Activated CD4-positive, alpha-beta T cell treated with anti-CD3 and anti-CD28 coated beads for 36 hours (primary cell): ENCODE measurements at regions of chr1 and their contacts with region 1.

Region 1: DNA sequence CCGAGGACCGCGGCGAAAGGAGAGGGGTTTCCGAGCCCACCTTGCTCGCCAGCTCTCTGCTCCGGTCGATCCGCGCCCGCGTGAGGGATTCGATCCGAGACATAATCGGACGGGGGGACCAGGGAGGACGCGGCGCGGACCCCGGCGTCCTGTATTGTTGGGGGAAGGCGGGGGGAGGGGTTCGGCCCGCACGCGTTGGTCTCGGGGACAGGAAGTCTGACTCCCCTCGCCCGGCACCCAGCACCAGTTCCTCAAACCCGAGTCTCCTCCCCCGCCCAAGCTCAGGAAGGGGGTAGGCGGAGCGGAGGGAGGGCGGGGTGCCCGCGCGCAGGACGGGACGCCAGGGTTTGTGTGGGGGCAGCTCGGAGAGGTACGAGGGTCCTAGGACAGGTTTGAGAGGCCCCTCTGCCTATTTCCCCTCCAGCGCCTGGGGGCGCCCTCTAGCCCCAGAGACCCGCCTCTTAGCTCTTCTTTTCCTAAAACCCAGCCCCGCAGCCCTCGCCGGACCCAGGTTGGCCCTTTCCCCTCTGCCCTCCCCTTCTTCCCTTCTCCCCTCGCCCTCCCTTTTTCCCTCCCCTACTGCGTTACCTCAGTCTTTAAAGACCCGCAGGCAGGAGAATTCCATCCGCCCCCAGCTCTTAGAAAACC is at the start of gene ARHGEF2:
- DNase-seq: peak; percentile 88
- ATAC-seq: peak; percentile 57
- H3K4me3 Mint-ChIP-seq: peak within 1 kb of the TSS; percentile 100
- H3K27ac Mint-ChIP-seq: peak within 1 kb of the TSS; percentile 96
- H3K4me1 Mint-ChIP-seq: peaks cover 68% of the 10 kb centered on the region
- H3K27me3 Mint-ChIP-seq: no peaks in the 10 kb centered on the region
- total RNA-seq, gene ARHGEF2: 135 to 216 TPM

Region 2: DNA sequence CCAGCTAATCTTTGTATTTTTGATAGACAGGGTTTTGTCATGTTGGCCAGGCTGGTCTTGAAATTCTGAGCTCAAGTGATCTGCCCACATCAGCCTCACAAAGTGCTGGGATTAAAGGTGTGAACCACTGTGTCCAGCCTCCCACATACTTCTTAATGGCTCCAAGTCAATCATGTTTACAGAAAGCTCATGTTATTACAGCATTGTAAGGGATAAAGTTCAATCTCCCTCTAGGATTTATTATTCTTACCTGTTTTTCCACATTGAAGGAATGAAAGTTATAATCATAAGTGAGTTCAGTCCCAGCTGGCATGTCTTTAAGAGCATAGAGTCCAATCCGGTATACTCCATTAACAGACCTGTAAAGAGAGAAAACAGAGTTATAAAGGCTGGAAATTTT is 618.4 kb before region 1 on chr1:
- CTCF ChIA-PET with region 1: no interaction called
- POLR2A ChIA-PET with region 1: no interaction called
- intact Hi-C with region 1: no loop called
- DNase-seq: no peak
- ATAC-seq: no peak
- H3K4me3 Mint-ChIP-seq: no peak overlapping the region
- H3K27ac Mint-ChIP-seq: no peak overlapping the region
- H3K4me1 Mint-ChIP-seq: no peaks in the 10 kb centered on the region
- H3K27me3 Mint-ChIP-seq: no peaks in the 10 kb centered on the region

Region 3: GRCh38 chr1:155688324-155689080 is 289.9 kb before region 1 on chr1 and contains the start of gene YY1AP1:
- CTCF ChIA-PET with region 1: no interaction called
- POLR2A ChIA-PET with region 1: no interaction called
- intact Hi-C with region 1: loop called in 1 of 2 experiments (anchors 5 kb)
- DNase-seq: peak; percentile 95
- ATAC-seq: peak; percentile 86
- H3K4me3 Mint-ChIP-seq: peak within 1 kb of the TSS; percentile 97
- H3K27ac Mint-ChIP-seq: peak within 1 kb of the TSS; percentile 94
- H3K4me1 Mint-ChIP-seq: peaks cover 29% of the 10 kb centered on the region
- H3K27me3 Mint-ChIP-seq: no peaks in the 10 kb centered on the region
- total RNA-seq, gene YY1AP1: 59.6 to 76.0 TPM

Region 4: GRCh38 chr1:155940531-155940992 is 37.9 kb before region 1 on chr1:
- CTCF ChIA-PET with region 1: interaction called, 47 read pairs
- POLR2A ChIA-PET with region 1: interaction called, 62 read pairs
- intact Hi-C with region 1: no loop called
- DNase-seq: peak; percentile 29
- ATAC-seq: peak; percentile 65
- H3K4me3 Mint-ChIP-seq: no peak overlapping the region
- H3K27ac Mint-ChIP-seq: peak overlapping the region; percentile 92
- H3K4me1 Mint-ChIP-seq: peaks cover 59% of the 10 kb centered on the region
- H3K27me3 Mint-ChIP-seq: no peaks in the 10 kb centered on the region

Region 5: DNA sequence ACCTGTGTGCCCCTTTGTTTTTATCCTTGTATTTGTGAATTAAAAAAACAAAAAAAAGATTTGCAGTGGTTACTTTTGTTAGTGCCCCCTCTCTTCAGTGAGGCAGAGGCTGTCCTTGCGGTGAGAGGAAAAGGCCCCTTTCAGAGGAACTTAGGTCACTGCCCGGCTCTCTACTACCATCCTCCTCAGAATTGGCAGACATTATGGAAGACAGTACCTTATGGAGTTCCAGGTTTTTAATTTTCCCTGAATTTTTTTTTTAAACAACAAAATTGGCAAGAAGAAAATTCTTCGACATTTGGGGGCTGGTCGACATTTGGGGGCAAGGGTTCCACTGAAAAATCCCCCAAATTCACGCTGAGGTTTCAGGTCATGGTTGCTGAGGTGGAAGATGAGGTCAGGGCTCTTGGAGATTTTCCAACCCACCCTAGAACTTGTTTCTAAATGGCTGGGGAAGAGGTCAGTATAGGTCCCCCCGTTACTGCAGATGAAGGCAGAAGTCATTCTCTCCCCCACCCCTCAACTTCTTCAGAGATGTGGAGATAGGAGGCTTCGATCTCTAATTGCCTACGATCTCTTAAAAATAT is 31.7 kb before region 1 on chr1:
- CTCF ChIA-PET with region 1: interaction called, 7 read pairs
- POLR2A ChIA-PET with region 1: interaction called, 20 read pairs
- intact Hi-C with region 1: loop called (anchors 1 to 2 kb)
- DNase-seq: no peak
- ATAC-seq: peak; percentile 13
- H3K4me3 Mint-ChIP-seq: peak overlapping the region; percentile 58
- H3K27ac Mint-ChIP-seq: peak overlapping the region; percentile 96
- H3K4me1 Mint-ChIP-seq: peaks cover 50% of the 10 kb centered on the region
- H3K27me3 Mint-ChIP-seq: no peaks in the 10 kb centered on the region